GM10248 (cell line): ENCODE measurements at regions of chr7 and their contacts with region 1.

Region 1: DNA sequence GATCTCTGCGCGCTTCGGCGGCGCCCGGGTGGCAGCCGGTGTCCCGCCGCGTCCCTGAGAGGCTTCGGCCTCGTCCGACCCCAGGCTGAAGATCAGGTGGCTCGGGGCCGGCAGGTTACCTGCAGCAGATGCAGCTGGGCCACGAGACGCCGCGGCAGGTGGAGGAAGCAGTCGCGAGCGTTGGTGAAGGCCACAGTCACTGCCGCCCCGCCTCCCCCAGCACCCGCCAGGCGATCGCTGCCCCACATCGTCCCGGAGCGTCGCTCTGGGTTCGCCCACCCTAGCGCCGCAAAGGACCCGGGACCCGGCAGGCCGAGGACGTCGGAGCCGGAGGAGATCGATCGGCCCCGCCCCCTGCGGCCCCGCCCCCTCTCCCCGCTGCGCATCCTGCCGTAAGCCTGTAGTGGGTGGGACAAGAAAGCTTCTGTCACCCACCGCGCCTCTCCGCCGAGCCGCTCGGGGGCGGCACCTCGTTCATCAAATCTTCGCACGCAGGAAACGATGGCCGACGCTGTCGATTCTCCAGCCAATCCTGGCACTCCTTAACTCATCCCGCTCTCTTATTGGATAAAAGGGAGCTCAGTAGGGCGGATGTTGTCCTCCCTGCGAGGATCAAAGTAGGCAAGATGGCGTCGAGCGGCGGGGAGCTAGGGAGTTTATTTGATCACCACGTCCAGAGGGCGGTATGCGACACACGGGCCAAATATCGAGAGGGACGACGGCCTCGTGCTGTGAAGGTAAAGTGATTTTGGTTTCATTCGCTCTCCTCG is at the starts of genes PEX1 and RBM48:
- DNase-seq: peak; percentile 95
- CTCF ChIP-seq: peak; percentile 79

Region 2: DNA sequence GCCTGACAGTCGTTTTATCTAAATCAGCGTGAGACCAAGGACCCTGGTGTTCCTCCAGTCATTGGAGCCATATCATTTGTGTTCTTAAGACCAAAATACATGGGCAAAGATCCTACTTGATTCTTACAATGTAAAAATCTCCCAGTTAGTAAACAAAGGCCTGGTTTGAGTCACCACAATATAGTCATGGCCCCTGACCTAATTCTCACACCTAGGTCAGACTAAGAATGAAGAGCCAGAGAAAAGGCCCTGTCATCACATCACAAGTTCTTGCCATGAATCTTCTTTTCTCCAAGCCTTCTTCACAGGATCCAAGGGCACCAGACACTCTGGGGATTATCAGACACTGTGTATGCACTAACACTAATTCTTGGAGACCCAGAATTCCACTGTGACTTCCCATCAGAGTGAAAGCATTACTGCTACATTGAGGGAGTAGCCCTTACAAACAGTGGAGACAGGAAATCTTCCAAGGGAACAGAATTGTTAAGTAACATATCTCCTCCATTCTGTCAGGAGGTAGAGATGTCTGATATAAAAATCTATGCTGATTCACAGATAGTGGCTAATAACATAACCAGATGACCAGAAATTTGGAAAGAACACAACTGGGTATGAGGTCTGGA is 43.0 kb before region 1 on chr7:
- CTCF ChIA-PET with region 1: no interaction called
- POLR2A ChIA-PET with region 1: no interaction called
- DNase-seq: no peak
- CTCF ChIP-seq: no peak

Region 3: GRCh38 chr7:92513167-92513902 is 15.0 kb before region 1 on chr7:
- CTCF ChIA-PET with region 1: interaction called, 13 read pairs
- POLR2A ChIA-PET with region 1: interaction called, 8 read pairs
- DNase-seq: no peak
- CTCF ChIP-seq: no peak

Region 4: GRCh38 chr7:92557249-92557648 is 28.9 kb after region 1 on chr7:
- CTCF ChIA-PET with region 1: interaction called, 10 read pairs
- POLR2A ChIA-PET with region 1: interaction called, 5 read pairs
- DNase-seq: no peak
- CTCF ChIP-seq: no peak

Region 5: DNA sequence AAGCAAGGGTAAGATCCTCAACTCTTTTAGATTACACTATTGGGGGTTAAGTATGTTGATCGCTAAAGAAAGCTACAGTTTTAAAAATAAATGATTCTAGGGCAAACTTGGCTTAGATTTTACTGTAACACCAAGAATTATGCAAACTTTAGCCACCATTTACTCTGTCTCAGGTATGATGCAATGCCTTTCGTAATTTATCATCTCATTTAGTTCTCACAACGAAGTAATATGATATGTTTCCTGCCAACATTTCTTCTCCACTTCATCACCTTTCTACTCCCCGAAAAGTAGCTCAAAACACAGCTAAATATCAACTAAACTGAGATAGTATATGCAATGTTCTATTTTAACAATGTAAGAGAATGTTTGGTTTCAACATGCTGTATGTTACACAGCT is 40.8 kb after region 1 on chr7:
- CTCF ChIA-PET with region 1: no interaction called
- POLR2A ChIA-PET with region 1: no interaction called
- DNase-seq: no peak
- CTCF ChIP-seq: no peak

Region 6: GRCh38 chr7:92669616-92670165 is 141.3 kb after region 1 on chr7:
- CTCF ChIA-PET with region 1: no interaction called
- POLR2A ChIA-PET with region 1: no interaction called
- DNase-seq: no peak
- CTCF ChIP-seq: no peak